ENCODE measurements at regions of chr6 and their contacts with region 1.

Region 1: DNA sequence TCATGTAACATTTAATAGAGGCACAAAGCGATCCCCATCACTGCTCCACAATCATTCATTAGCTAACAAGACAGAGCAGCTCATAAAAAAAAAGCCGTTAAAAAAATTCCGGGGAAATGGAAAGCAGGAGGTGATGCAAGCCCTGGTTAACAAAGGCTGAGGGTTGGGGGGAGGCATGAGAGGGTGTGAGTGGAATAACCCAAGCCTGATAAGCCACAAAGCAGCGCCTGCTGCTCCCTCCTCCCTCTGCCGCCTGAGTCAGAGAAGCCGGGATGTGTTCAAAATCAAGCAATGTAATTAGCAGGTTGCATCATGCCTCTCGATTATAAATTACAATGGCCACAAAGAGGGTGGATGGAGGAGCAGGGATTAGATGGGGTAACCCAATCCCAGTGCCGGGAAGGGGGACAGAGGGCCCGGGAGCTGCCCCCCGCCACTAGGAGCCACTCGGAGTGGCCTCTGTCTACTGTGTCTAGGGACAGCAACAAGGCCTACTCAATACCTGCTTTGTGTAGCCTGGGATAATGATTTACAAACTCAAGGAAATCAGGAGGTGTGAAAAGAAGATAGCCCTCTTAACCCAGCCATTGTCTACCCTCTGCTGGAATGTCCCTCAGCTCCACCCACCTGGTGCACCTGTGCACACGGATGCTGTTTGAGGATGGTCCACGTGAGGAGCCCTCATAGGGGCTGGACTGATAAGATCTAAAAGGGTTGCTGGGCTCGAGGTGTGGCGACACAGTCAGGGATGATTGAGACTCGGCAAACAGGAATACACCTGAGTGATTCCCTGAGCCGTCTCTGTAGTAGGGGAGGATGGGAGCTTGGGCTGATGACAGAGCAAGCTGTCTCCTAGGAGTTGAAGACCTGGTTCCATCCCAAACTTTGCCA is 156.9 kb downstream of the VEGFA start:
- DNase-seq: peak; percentile 97
- H3K4me3 Mint-ChIP-seq: no peak overlapping the region
- H3K27ac Mint-ChIP-seq: peak overlapping the region; percentile 92
- H3K4me1 Mint-ChIP-seq: peaks cover 31% of the 10 kb centered on the region
- H3K27me3 Mint-ChIP-seq: no peaks in the 10 kb centered on the region
- CTCF ChIP-seq: no peak

Region 2: GRCh38 chr6:43891072-43891870 is 35.6 kb before region 1 on chr6:
- CTCF ChIA-PET with region 1: no interaction called
- POLR2A ChIA-PET with region 1: no interaction called
- intact Hi-C with region 1: no loop called
- DNase-seq: no peak
- H3K4me3 Mint-ChIP-seq: no peak overlapping the region
- H3K27ac Mint-ChIP-seq: no peak overlapping the region
- H3K4me1 Mint-ChIP-seq: no peaks in the 10 kb centered on the region
- H3K27me3 Mint-ChIP-seq: peaks cover 13% of the 10 kb centered on the region
- CTCF ChIP-seq: no peak

Region 3: DNA sequence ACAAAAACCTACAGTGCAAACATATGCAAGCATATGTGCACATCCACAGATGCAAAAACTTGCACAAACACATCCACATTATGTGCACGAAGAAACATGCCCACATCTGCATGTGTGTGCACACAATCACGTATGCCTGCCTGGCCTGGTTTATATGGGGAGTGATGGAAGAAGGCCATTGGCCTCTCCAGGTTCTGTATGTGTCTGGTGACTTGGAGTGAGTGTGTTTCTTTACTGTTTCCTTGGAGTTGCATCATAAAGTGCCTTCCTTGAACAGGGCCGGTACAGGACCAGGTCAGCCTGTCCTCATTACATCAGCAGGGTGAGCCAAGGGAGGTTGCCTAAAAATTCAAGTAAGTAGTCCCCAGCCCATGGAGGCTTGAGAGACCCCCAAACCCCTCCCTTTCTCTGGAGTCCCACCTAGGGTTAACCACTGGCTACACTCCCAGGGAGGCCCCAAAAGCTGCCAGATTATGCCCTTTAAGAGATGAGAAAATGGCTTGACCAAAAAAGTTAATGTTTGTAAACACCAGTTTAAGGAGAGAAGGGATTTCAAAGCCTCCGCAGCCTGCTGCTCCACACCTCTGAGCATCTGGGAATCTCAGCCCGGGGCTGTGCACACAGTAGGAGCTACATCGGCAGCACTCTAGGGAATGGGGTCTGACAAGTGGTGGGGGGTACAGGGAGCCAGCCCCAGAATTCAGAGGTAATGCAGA is 16.1 kb before region 1 on chr6:
- CTCF ChIA-PET with region 1: interaction called, 4 read pairs
- POLR2A ChIA-PET with region 1: interaction called, 3 read pairs
- intact Hi-C with region 1: loop called (anchors 2 kb)
- DNase-seq: peak; percentile 51
- H3K4me3 Mint-ChIP-seq: no peak overlapping the region
- H3K27ac Mint-ChIP-seq: peak overlapping the region; percentile 84
- H3K4me1 Mint-ChIP-seq: peaks cover 23% of the 10 kb centered on the region
- H3K27me3 Mint-ChIP-seq: no peaks in the 10 kb centered on the region
- CTCF ChIP-seq: no peak

Region 4: DNA sequence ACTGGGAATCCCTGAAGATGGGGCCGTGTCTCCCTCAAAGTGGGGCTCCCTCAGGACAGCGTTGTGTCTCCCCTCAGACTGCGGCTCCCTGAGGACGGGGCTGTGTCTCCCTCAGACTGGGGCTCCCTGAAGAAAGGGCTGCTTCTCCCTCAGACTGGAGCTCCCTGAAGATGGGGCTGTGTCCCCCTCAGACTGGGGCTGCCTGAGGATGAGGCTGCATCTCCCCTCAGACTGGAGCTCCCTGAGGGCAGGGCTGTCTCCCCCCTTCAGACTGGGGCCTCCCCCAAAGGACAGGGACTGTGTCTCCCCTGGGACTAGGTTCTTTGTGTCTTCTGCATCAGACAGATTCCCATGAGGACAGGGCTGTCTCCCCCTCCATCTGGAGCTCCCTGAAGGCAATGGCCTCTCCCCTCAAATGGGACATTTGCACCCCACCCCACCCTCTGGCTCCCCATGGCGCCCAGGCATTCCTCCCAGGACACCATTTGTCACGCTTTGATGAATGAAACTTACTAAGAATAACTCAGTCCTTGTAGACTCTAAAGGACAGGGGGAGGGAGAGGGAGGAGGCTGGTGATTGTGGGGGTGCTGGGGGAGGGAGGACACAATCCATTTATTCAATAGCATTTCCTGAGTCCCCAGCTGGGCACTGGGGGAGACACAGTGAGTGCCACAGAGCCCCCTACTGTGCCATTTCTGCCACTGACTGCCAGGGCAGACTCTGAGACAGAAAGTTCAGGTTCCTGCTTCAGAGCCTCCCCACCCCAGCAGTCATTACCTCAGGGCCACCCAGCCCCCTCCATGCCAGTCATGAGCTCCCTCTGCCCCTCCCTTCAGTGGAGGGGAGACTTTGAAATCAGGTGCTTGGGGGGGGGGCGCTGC is 78.0 kb after region 1 on chr6:
- CTCF ChIA-PET with region 1: no interaction called
- POLR2A ChIA-PET with region 1: no interaction called
- intact Hi-C with region 1: loop called (anchors 2 kb)
- DNase-seq: peak; percentile 48
- H3K4me3 Mint-ChIP-seq: no peak overlapping the region
- H3K27ac Mint-ChIP-seq: no peak overlapping the region
- H3K4me1 Mint-ChIP-seq: peaks cover 17% of the 10 kb centered on the region
- H3K27me3 Mint-ChIP-seq: no peaks in the 10 kb centered on the region
- CTCF ChIP-seq: peak; percentile 31

Measured in MCF 10A (cell line).